ENCODE measurements at regions of chr1 and their contacts with region 1.

Region 1: DNA sequence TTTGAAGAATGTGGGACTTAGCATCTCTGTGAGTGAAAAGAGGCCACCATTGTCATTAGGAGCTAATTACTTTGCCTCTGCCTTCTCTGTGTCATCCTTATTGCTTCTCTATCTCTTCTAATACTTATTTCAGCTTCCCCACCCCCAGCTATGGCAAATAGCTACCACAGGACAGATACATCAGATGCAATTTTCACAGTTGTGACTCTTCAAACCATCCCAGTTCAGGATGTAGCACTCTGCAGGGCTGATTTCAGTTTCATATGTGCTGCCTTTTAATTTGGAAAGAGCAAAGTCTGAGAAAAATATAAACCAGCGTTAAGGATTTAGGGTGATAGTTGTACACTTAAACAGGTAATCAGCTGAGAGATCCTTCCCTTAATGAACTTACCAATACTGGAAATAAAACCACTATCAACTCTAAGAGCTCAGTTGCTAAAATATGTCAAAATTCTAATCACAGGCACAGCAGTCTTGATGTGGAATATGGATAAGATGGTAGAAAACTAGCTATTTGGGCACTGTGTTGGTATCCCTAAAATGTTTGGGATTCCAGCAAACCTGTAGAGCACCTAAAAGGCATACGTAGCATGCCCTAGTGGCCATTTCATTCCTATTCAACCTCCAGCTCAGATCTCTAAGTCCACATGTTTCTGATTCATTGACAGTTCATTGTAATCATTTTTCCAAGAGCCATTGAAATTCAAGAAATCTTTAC is 148.4 kb downstream of the SYT2 start:
- DNase-seq: no peak
- H3K4me3 ChIP-seq: no peak overlapping the region
- H3K27ac ChIP-seq: no peak overlapping the region
- H3K4me1 ChIP-seq: no peaks in the 10 kb centered on the region
- H3K27me3 ChIP-seq: no peaks in the 10 kb centered on the region
- CTCF ChIP-seq: peak; percentile 23 to 31

Region 2: DNA sequence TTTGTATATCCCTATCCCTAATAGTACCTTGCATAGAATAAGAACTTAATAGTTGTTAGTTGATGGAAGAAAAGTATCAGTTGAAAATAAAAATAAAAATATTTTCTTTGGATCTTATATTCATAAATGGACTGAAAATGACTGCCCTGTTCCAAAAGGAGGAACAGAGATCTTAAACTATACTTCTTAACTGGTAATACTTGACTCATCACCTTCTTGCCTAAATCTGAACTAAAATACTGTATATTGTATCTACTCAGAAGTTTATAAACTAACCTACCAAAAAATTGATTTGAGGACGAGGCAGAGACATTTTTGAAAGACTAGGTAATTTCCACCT is 30.4 kb before region 1 on chr1:
- CTCF ChIA-PET with region 1: interaction called, 11 read pairs
- dilution Hi-C with region 1: no loop called
- in situ Hi-C with region 1: no loop called
- intact Hi-C with region 1: no loop called
- DNase-seq: no peak
- H3K4me3 ChIP-seq: no peak overlapping the region
- H3K27ac ChIP-seq: peak overlapping the region; percentile 52
- H3K4me1 ChIP-seq: peaks cover 3% of the 10 kb centered on the region
- H3K27me3 ChIP-seq: no peaks in the 10 kb centered on the region
- CTCF ChIP-seq: no peak

Measured in mammary epithelial cell (primary cell).